ENCODE measurements at regions of chr15 and their contacts with region 1.

Region 1: GRCh38 chr15:35519541-35520149 is 26.3 kb downstream of the DPH6 start:
- DNase-seq: no peak
- ATAC-seq: peak in 3 of 4 donors; percentile 61 to 85 (median 80)
- H3K4me3 ChIP-seq: no peak overlapping the region
- H3K27ac ChIP-seq: no peak overlapping the region
- H3K4me1 ChIP-seq: peaks cover 0 to 27% (median 8%) of the 10 kb centered on the region in 12 donors
- H3K27me3 ChIP-seq: no peaks in the 10 kb centered on the region
- CTCF ChIP-seq: peak; percentile 44 to 76 (median 68)
- POLR2A ChIP-seq: no peak

Region 2: DNA sequence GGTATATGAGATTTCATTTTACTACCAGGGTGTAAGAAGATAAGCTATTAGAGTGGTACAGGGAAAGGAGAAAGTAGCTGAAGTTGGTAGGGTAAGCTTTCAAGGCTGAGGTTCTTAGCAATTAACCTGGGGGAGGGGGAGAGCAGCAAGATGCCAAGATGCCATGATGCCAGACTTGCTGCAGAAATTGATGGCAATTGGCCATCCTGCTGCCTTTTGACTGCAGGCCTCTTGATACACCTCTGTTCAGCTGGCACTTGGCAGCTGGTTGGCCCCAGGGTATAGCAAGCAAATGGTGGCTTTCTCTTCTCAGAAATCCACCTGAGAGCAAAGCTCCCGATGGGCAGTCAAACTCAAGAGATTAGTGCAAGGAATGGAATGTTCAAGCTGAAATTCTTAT is 47.7 kb after region 1 on chr15:
- intact Hi-C with region 1: no loop called
- DNase-seq: peak in 2 of 5 donors; percentile 10 to 33
- ATAC-seq: peak; percentile 16 to 68 (median 60)
- H3K4me3 ChIP-seq: peak overlapping the region in 1 of 12 donors; percentile 6
- H3K27ac ChIP-seq: peak overlapping the region in 9 of 12 donors; percentile 33 to 79 (median 54)
- H3K4me1 ChIP-seq: peaks cover 0 to 13% (median 0%) of the 10 kb centered on the region in 12 donors
- H3K27me3 ChIP-seq: no peaks in the 10 kb centered on the region
- CTCF ChIP-seq: no peak
- POLR2A ChIP-seq: no peak

Region 3: GRCh38 chr15:35674873-35675781 is 155.5 kb after region 1 on chr15:
- intact Hi-C with region 1: no loop called
- DNase-seq: no peak
- ATAC-seq: peak in 3 of 4 donors; percentile 13 to 43 (median 38)
- H3K4me3 ChIP-seq: no peak overlapping the region
- H3K27ac ChIP-seq: peak overlapping the region; percentile 16 to 70 (median 59)
- H3K4me1 ChIP-seq: peaks cover 11 to 49% (median 38%) of the 10 kb centered on the region in 12 donors
- H3K27me3 ChIP-seq: no peaks in the 10 kb centered on the region
- CTCF ChIP-seq: no peak
- POLR2A ChIP-seq: no peak

Region 4: DNA sequence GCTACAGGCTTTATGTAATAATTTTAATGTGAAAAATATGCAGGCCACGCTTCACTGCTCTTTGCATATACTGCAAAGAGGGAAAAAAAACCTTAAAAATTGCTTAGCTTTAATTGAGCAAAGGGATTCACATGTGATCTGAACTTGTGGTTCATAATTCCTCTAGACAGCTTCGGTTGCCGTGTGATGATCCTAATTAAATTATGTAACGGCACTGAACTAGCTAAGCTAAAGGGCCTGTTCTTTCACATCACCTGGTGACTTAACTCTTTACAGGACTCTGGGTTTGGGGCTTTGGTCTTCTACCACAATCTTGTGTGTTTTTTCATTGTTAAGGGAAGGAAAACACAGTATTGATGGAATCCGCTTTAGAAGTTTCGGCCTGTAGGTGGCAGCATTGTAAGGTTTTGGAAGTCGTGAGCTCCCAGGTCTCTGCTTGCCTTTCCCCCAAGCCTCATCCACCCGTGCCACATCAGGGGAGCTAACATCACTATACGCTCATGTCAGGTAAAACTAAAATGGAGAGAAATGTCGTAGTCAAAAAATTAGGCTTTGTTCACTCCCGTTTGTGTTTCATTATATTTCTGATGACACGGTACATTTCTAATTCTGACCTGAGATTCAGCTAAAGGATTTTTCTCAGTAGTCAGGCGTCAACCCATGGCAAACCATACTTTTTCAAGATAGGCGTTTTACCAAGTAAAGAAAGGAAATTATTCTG is 231.9 kb after region 1 on chr15:
- intact Hi-C with region 1: loop called in 5 of 10 experiments (anchors 2 to 10 kb)
- DNase-seq: peak in 4 of 5 donors; percentile 66 to 80 (median 72)
- ATAC-seq: peak; percentile 79 to 91 (median 86)
- H3K4me3 ChIP-seq: peak overlapping the region in 2 of 12 donors; percentile 6 to 13
- H3K27ac ChIP-seq: no peak overlapping the region
- H3K4me1 ChIP-seq: peaks cover 0 to 21% (median 0%) of the 10 kb centered on the region in 12 donors
- H3K27me3 ChIP-seq: no peaks in the 10 kb centered on the region
- CTCF ChIP-seq: peak; percentile 57 to 84 (median 78)
- POLR2A ChIP-seq: no peak

Region 5: GRCh38 chr15:36080759-36081158 is 561.1 kb after region 1 on chr15:
- intact Hi-C with region 1: no loop called
- DNase-seq: peak in 3 of 5 donors; percentile 37 to 63 (median 62)
- ATAC-seq: peak; percentile 86 to 99 (median 94)
- H3K4me3 ChIP-seq: no peak overlapping the region
- H3K27ac ChIP-seq: peak overlapping the region in 1 of 12 donors; percentile 13
- H3K4me1 ChIP-seq: peaks cover 0 to 3% (median 0%) of the 10 kb centered on the region in 12 donors
- H3K27me3 ChIP-seq: no peaks in the 10 kb centered on the region
- CTCF ChIP-seq: no peak
- POLR2A ChIP-seq: no peak

Region 6: GRCh38 chr15:36579792-36580431 is 1060.3 kb after region 1 on chr15:
- intact Hi-C with region 1: loop called in 1 of 10 experiments (anchors 10 kb)
- DNase-seq: peak in 4 of 5 donors; percentile 31 to 66 (median 44)
- ATAC-seq: peak in 3 of 4 donors; percentile 23 to 54 (median 36)
- H3K4me3 ChIP-seq: peak overlapping the region; percentile 15 to 83 (median 74)
- H3K27ac ChIP-seq: peak overlapping the region; percentile 18 to 91 (median 88)
- H3K4me1 ChIP-seq: peaks cover 0 to 41% (median 12%) of the 10 kb centered on the region in 12 donors
- H3K27me3 ChIP-seq: no peaks in the 10 kb centered on the region
- CTCF ChIP-seq: peak in 1 of 12 donors; percentile 0
- POLR2A ChIP-seq: no peak

Region 7: DNA sequence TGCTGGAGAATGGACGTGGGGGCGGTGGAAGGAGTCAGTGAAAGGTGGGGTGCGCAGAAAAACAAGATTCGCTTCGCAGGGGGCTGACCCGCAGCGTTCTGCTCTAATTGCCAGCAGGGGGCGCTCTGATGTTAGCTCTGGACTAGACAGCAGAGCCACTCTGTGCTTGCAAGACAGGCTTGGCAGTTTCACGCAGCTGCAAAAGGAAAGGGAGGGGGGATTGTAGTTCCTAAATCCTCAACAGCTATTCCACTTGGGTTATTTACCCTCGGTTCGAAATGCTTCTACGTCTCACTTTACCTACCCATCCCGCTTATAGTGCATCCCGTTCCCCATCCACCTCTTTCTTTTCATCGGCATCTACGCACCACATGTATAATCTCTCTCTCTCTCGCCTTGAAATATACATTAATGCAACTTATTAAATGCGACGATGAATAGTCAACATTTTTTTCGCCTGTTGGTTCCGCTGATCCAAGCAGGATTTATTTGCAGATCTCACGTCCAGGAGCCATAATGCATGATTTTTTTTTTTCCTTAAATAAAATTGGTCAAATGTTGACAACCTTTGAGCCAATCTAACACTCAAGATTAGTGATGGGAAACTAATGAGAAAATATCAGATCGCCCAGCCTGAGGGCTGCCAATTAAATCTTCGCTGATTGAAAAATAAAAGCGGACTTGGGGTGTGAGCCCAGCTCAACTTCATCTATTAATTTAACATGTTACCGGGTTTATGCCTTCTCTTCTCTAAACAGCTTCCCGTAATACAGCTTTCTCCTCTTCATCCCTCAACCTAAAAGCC is 1364.3 kb after region 1 on chr15:
- intact Hi-C with region 1: loop called in 1 of 10 experiments (anchors 10 kb)
- DNase-seq: peak; percentile 86 to 92 (median 89)
- ATAC-seq: peak; percentile 86 to 91 (median 90)
- H3K4me3 ChIP-seq: peak overlapping the region in 11 of 12 donors; percentile 10 to 56 (median 43)
- H3K27ac ChIP-seq: peak overlapping the region in 1 of 12 donors; percentile 79
- H3K4me1 ChIP-seq: peaks cover 0 to 32% (median 3%) of the 10 kb centered on the region in 12 donors
- H3K27me3 ChIP-seq: peaks cover 0 to 94% (median 20%) of the 10 kb centered on the region in 9 donors
- CTCF ChIP-seq: peak; percentile 73 to 91 (median 82)
- POLR2A ChIP-seq: no peak